ENCODE measurements at regions of chr5 and their contacts with region 1.

Region 1: DNA sequence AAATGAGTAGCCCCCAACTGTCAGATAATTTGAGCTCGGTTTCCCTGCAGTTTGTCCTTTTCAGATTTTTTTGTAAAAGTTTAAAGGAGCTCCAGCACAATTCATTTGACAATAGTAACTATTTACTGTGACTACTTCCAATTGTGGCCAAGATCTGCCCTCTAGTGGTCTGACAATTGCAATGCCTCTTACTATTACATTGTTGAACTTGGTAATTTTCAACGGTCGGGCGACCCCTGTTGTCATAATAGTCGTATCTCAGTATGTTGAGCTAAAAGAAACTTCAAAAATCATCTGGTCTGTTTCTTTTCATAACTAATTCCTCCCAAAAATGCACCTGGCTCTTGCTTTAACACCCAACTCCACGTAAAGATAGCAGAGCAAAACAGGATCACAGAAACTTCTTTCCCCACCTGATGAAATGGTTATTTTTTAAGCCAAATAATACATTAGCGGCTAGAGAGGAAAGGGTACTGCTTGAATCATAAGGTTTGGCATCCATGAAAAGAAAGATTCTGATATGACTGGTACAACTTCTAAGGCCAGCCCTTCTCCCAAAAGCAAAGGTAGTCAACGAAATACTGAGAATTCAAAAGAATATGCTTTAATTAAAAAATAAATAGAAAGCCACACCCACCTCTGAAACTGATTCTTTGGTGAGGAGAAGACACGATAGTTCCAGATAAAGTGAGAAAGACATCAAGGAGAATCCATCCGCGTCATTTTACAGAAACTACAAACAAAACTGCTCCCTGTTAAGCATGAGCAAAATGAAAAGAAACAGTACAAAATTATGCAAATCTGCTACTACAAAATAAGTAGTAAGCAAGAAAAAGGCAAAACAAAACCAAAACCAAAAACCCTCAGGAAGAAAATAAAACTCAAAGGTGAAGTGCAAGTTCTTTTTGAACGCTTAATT is 76.9 kb upstream of the HTR4 start:
- DNase-seq: peak; percentile 95
- H3K4me3 Mint-ChIP-seq: no peak overlapping the region
- H3K27ac Mint-ChIP-seq: peak overlapping the region; percentile 62
- H3K4me1 Mint-ChIP-seq: peaks cover 52% of the 10 kb centered on the region
- H3K27me3 Mint-ChIP-seq: no peaks in the 10 kb centered on the region
- CTCF ChIP-seq: peak; percentile 99

Region 2: DNA sequence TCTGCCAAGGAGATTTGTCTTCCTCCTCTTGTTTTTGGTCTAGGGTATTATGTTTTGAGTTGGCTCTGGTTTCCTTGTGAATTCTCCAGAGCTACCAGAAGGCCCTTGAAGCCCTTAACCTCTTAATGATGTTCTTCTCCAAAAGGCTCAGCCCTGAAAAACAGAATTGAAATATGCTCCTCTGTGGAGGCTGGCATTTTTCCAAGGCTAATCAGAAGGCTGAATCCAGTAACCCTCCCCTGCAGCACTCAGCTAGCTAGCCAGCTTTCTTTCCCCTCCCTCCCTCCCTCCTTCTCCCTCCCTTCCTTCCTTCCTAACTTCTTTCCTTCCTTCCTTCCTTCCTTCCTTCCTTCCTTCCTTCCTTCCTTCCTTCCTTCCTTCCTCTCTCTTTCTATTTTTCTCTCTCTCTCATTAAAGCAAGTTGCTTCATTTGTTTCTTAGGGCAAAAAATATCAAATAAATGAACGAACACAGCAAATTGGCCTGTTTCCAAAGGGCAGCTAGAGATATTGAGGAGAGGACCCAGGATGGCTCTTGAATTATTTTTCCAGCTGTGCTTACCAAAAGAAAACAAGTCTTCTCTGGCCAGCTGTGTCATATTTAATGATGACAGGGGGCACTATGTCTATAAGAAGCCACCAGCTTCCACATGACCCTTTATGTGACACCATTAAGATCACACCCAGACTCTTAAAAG is 987.4 kb before region 1 on chr5:
- CTCF ChIA-PET with region 1: no interaction called
- POLR2A ChIA-PET with region 1: no interaction called
- intact Hi-C with region 1: no loop called
- DNase-seq: no peak
- H3K4me3 Mint-ChIP-seq: no peak overlapping the region
- H3K27ac Mint-ChIP-seq: no peak overlapping the region
- H3K4me1 Mint-ChIP-seq: peaks cover 5% of the 10 kb centered on the region
- H3K27me3 Mint-ChIP-seq: peaks cover 51% of the 10 kb centered on the region
- CTCF ChIP-seq: no peak

Region 3: DNA sequence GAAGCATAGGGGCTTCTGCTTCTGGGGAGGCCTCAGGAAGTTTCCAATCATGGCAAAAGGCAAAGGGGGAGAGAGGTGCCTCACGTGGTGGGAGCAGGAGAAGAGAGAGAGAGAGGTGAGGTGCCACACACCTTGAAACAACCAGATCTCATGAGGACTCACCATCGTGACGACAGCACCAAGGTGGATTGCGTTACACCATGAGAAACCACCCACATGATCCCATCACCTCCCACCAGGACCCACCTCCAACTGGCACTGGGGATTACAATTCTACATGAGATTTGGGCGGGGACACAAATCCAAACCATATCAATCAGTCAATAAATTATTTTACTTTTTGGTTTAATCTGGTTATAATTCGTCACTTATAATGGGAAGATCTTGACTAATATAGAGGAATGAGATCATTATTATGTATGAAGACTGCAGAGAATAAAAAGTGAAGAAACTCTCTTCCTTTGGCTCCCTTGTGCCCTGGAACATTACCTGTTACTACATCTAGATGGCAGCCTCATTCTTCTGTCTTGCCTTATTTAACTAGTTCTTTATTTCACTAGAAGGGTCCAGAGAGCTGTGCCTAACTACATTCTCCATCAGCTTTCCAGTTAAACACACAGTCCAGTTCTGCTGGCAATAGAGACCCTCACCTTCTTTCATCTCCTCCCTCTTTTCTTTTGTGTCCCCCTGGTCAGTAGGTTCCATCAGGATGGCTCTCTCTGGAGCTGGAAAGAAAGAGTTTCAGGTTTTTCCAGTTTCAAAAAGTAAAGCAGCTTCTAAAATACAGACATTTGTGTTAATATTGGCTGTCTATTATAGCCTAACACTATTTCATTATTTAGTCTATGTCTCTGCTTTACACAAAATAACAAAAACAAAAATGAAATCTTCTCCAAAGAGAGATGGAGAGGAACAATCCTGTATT is 440.7 kb before region 1 on chr5:
- CTCF ChIA-PET with region 1: interaction called, 9 read pairs
- POLR2A ChIA-PET with region 1: no interaction called
- intact Hi-C with region 1: loop called (anchors 1 kb)
- DNase-seq: peak; percentile 51
- H3K4me3 Mint-ChIP-seq: no peak overlapping the region
- H3K27ac Mint-ChIP-seq: no peak overlapping the region
- H3K4me1 Mint-ChIP-seq: no peaks in the 10 kb centered on the region
- H3K27me3 Mint-ChIP-seq: no peaks in the 10 kb centered on the region
- CTCF ChIP-seq: peak; percentile 71

Region 4: DNA sequence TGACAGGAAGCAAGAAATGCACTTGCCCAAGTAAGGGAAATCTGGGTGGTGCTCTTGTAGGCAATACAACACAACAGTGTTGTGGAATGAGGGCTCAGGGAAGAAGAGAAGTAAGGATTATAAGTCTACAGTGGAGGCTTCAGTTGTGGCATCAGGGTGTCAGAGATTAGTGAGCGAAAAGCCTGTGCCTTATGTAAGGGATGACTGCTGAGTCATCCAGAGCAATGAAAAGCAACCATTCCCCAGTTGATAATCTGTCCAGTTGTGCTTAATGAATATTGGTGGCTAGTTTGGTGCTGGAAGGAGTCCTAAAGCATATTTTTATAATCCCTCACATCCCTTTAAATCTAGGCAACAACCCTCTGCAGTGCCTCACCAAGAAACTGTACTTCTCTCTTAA is 305.4 kb before region 1 on chr5:
- CTCF ChIA-PET with region 1: interaction called, 82 read pairs
- POLR2A ChIA-PET with region 1: interaction called, 3 read pairs
- intact Hi-C with region 1: no loop called
- DNase-seq: no peak
- H3K4me3 Mint-ChIP-seq: no peak overlapping the region
- H3K27ac Mint-ChIP-seq: peak overlapping the region; percentile 2
- H3K4me1 Mint-ChIP-seq: no peaks in the 10 kb centered on the region
- H3K27me3 Mint-ChIP-seq: no peaks in the 10 kb centered on the region
- CTCF ChIP-seq: no peak

Region 5: GRCh38 chr5:148708854-148709253 is 22.3 kb before region 1 on chr5:
- CTCF ChIA-PET with region 1: interaction called, 38 read pairs
- POLR2A ChIA-PET with region 1: interaction called, 3 read pairs
- intact Hi-C with region 1: no loop called
- DNase-seq: no peak
- H3K4me3 Mint-ChIP-seq: no peak overlapping the region
- H3K27ac Mint-ChIP-seq: no peak overlapping the region
- H3K4me1 Mint-ChIP-seq: no peaks in the 10 kb centered on the region
- H3K27me3 Mint-ChIP-seq: peaks cover 7% of the 10 kb centered on the region
- CTCF ChIP-seq: no peak

Region 6: DNA sequence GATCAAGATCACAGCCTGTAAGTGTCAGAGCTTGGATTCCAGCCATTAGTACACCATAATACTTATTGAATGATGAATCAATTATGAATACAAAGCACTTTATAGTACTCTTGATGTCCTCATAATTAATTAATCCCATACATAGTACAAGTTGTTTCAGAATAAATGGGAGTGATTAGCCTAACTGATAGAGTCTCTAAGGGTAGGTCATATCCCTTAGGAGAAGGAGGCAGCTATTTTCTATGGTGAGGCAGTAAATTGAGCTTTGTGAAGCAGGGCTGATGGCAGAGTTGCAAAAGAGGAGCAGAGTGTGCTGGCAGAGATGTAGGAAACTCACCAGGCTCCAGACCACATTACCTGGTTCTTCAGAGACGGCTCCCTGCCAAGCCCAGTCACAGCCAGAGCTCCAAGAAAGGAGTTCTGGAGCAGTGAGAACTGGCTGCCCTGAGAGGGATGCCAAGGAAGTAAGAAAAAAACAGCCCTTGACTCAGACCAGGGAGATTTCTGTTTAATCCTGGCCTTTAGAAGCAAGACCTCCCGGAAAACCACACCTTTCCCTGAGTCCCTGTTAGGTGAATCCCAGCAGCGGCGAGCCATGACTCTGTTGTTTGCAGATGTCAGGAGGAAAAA is 218.8 kb after region 1 on chr5:
- CTCF ChIA-PET with region 1: interaction called, 16 read pairs
- POLR2A ChIA-PET with region 1: interaction called, 3 read pairs
- intact Hi-C with region 1: no loop called
- DNase-seq: peak; percentile 97
- H3K4me3 Mint-ChIP-seq: no peak overlapping the region
- H3K27ac Mint-ChIP-seq: peak overlapping the region; percentile 92
- H3K4me1 Mint-ChIP-seq: peaks cover 17% of the 10 kb centered on the region
- H3K27me3 Mint-ChIP-seq: no peaks in the 10 kb centered on the region
- CTCF ChIP-seq: no peak

Region 7: DNA sequence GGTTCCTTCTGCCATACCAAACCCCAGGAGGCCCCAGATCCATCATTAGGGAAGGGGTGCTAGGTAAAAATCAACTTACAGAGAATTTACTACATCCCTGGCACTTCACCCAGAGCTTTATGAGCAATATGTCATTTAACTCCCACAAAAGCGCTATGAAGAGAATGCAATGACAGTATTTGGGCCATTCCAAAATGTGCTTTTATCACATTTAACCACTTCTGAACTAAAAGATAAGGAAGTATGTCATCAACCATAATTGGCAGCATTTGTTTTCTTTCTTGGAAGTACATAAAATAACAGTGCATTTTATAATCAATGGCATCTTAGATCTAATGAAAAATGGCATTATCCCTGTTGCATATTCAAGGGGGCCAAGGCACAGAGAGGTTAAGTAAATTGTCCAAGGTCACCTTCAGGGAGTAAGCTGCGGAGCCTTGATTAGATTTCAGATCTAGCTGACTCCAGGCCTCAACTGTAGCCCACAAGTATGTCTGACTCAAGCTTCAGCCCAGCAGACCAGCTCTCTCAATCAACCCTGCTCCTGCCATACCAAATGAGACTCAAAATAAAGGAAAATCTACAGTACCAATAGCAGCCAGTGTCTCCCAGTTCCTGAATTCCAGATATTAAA is 315.1 kb after region 1 on chr5:
- CTCF ChIA-PET with region 1: interaction called, 10 read pairs
- POLR2A ChIA-PET with region 1: no interaction called
- intact Hi-C with region 1: no loop called
- DNase-seq: no peak
- H3K4me3 Mint-ChIP-seq: no peak overlapping the region
- H3K27ac Mint-ChIP-seq: no peak overlapping the region
- H3K4me1 Mint-ChIP-seq: peaks cover 6% of the 10 kb centered on the region
- H3K27me3 Mint-ChIP-seq: no peaks in the 10 kb centered on the region
- CTCF ChIP-seq: no peak

Region 8: DNA sequence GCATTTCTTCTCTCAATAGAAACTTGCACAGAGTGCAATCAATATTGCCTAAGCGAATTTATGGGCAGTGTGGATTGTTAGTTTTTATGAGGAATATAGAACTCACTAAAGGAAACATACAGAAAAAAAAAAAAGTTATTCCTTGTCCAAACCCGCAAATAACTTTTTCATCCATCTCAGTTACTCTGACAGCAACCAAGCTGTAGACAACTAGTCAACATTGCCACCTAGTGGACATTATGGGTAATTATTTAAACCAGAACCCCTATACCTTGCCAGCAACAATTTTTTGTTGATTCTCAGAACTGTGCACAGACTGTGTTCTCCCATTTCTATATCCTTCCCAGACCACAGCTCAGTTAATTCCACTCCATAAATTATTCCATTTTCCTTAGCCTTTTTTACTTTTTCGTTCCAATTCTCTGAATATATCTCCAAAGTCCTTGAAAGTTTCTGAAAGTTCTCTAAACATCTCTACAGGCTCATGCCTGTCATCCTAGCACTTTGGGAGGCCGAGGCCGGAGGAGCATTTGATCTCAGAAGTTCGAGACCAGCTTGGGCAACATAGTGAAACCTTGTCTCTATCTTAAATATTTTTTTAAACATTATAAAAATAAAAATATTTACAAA is 537.8 kb after region 1 on chr5:
- CTCF ChIA-PET with region 1: interaction called, 20 read pairs
- POLR2A ChIA-PET with region 1: interaction called, 4 read pairs
- intact Hi-C with region 1: loop called (anchors 2 kb)
- DNase-seq: peak; percentile 84
- H3K4me3 Mint-ChIP-seq: no peak overlapping the region
- H3K27ac Mint-ChIP-seq: no peak overlapping the region
- H3K4me1 Mint-ChIP-seq: peaks cover 14% of the 10 kb centered on the region
- H3K27me3 Mint-ChIP-seq: no peaks in the 10 kb centered on the region
- CTCF ChIP-seq: peak; percentile 91

Region 9: GRCh38 chr5:149697001-149697400 is 965.8 kb after region 1 on chr5:
- CTCF ChIA-PET with region 1: no interaction called
- POLR2A ChIA-PET with region 1: no interaction called
- intact Hi-C with region 1: no loop called
- DNase-seq: peak; percentile 46
- H3K4me3 Mint-ChIP-seq: no peak overlapping the region
- H3K27ac Mint-ChIP-seq: no peak overlapping the region
- H3K4me1 Mint-ChIP-seq: peaks cover 12% of the 10 kb centered on the region
- H3K27me3 Mint-ChIP-seq: peaks cover 70% of the 10 kb centered on the region
- CTCF ChIP-seq: no peak